Right cardiac atrium (tissue), 5 donors: ENCODE measurements at regions of chr7 and their contacts with region 1.

Region 1: DNA sequence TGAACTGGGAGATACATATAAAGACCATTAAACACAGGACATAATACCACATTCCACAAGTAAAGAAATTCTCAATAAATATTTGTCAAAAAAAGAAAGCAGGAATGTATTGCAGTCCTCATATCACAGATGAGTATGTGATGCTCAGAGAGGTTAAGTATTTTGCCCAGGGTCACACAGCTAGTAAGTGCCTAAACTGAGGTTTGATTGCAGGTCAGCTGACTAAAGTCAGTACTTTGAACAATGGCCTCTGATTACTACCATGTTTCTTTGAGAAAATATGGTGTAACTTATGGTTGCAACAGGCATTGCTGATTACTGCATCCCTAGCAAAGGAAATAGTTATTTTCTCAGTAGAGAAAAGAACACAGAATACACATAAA is 267.1 kb downstream of the ELMO1 start:
- DNase-seq: no peak
- ATAC-seq: no peak
- H3K4me3 ChIP-seq: no peak overlapping the region
- H3K27ac ChIP-seq: no peak overlapping the region
- H3K4me1 ChIP-seq: no peaks in the 10 kb centered on the region
- H3K27me3 ChIP-seq: no peaks in the 10 kb centered on the region

Region 2: GRCh38 chr7:36967387-36967786 is 214.2 kb before region 1 on chr7:
- intact Hi-C with region 1: loop called (anchors 5 kb)
- DNase-seq: peak; percentile 53 to 70 (median 60)
- ATAC-seq: peak; percentile 94 to 95
- H3K4me3 ChIP-seq: no peak overlapping the region
- H3K27ac ChIP-seq: no peak overlapping the region
- H3K4me1 ChIP-seq: no peaks in the 10 kb centered on the region
- H3K27me3 ChIP-seq: no peaks in the 10 kb centered on the region

Region 3: DNA sequence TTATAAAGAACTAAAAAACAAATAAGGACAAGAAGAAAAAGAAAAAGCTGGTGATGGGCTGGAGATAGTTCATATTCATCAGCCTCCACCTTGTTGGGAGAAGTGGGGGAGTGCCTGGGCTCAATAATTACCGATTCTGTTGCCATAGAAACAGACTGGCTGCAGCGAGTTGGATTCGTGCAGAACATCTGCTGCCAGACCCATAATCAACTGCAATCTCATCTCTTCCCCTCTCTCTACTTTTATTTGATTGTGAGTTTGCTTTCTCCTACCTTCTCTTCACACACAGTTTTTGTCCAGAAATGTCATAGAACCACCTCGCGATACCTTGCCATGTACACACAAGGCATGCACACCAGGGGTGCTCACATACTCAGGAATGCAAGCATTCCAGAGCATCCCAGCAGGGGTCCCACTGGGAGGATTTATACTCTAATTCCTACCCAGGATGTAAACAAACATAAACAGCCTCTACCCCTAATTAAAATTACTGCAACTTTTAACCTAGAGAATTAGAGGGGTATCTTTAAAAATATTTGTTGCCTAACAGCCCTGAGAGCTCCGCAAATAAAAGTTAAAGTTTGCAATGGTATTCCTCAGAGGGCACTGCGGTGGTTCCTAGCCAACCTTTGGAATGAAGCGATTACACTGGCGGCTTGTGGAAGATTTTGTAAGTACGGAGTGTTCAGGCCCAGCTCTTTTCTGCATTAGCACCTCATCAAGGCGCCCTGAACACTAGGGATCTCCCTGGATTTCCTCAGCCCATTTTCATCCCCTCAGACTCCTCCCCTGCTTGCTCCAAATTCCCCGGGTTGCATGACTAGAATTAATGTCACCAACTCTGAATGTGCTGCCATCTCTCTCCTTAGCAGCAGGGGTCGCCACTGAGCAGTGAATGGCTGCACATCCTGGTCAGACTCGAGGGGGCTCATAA is 194.8 kb before region 1 on chr7:
- intact Hi-C with region 1: loop called in 3 of 4 experiments (anchors 5 kb)
- DNase-seq: peak; percentile 34 to 82 (median 60)
- ATAC-seq: peak; percentile 65 to 72
- H3K4me3 ChIP-seq: no peak overlapping the region
- H3K27ac ChIP-seq: no peak overlapping the region
- H3K4me1 ChIP-seq: peaks cover 3% of the 10 kb centered on the region
- H3K27me3 ChIP-seq: no peaks in the 10 kb centered on the region

Region 4: DNA sequence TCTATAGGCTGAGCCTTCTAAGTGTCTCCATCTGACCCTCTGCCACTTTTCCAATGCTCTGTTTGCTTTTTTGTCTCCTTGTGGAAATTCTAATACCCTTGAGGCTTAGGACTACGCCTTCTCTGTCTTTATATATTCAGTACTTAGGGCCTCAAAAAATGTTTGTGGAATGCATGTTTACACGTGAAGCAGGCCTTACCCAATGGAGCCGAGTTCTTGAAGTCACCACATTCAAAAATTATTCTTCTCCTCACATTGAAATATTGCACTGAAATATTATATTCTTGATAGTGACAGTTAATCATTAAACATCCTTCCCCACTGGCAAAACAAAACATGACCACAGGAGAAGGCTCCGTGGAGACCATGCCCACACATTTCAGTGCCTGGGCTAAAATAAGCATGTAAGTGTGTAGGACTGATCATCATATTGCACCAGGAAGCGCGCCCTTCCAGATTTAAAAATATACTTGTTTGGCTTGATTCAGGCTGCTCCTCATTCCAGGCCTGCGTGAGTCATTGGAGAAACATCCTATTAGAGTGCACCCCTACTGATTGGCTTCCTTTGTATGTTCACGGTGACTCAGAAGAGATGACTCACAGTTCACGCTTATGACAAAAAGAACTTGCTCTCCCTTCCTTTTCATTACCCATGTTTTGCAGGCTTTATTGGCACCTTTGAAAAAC is 149.8 kb before region 1 on chr7:
- intact Hi-C with region 1: no loop called
- DNase-seq: peak; percentile 70 to 76 (median 74)
- ATAC-seq: peak; percentile 100
- H3K4me3 ChIP-seq: no peak overlapping the region
- H3K27ac ChIP-seq: peak overlapping the region; percentile 97
- H3K4me1 ChIP-seq: peaks cover 10% of the 10 kb centered on the region
- H3K27me3 ChIP-seq: no peaks in the 10 kb centered on the region